WTC11 (cell line): ENCODE measurements at regions of chr6 and their contacts with region 1.

Region 1: DNA sequence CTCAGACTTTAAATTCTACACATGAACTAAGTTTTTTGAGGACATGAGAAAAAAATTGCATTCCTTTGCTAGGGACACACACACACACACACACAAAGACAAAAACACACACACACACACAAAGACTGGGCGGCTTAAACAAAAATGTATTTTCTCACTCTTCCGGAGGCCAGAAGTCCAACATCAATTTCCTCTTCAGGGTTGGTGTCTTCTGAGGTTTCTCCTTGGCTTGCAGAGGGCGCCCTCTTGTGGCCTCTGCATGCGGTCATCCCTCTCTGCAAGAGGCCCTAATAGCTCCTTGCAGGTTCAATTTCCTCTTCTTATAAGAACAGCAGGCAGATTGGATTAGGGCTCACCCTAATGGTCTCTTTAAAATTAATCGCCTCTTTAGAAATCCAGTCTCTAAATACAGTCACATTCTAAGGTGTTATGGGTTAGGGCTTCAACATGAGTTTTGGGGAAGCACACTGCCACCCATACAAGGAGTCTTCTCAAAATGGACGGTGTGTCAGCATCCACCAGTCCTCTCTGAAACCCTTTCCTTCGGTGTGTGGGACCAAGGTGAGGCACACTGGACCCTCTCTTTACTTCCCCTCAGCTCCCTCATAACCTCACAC is 61.4 kb downstream of the GPR6 start:
- DNase-seq: peak; percentile 89
- ATAC-seq: peak; percentile 80
- H3K4me3 Mint-ChIP-seq: peak overlapping the region; percentile 71
- H3K27ac Mint-ChIP-seq: peak overlapping the region; percentile 91
- H3K4me1 Mint-ChIP-seq: peaks cover 23% of the 10 kb centered on the region
- H3K27me3 Mint-ChIP-seq: no peaks in the 10 kb centered on the region
- CTCF ChIP-seq: peak; percentile 92

Region 2: DNA sequence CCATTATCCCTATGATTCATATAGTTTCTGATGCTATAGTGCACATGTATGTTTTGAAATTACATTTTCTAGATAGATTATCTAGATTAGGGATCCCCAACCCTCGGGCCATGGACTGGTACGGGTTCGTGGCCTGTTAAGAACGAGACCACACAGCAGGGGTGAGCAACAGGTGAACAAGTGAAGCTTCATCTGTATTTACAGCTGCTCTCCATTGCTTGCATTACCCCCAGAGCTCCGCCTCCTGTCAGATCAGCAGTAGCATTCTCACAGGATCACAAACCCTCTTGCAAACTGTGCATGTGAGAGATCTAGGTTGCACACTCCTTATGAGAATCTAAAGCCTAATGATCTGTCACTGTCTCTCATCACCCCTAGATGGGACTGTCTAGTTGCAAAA is 933.8 kb before region 1 on chr6:
- CTCF ChIA-PET with region 1: no interaction called
- POLR2A ChIA-PET with region 1: no interaction called
- DNase-seq: no peak
- ATAC-seq: no peak
- H3K4me3 Mint-ChIP-seq: no peak overlapping the region
- H3K27ac Mint-ChIP-seq: no peak overlapping the region
- H3K4me1 Mint-ChIP-seq: no peaks in the 10 kb centered on the region
- H3K27me3 Mint-ChIP-seq: no peaks in the 10 kb centered on the region
- CTCF ChIP-seq: no peak

Region 3: DNA sequence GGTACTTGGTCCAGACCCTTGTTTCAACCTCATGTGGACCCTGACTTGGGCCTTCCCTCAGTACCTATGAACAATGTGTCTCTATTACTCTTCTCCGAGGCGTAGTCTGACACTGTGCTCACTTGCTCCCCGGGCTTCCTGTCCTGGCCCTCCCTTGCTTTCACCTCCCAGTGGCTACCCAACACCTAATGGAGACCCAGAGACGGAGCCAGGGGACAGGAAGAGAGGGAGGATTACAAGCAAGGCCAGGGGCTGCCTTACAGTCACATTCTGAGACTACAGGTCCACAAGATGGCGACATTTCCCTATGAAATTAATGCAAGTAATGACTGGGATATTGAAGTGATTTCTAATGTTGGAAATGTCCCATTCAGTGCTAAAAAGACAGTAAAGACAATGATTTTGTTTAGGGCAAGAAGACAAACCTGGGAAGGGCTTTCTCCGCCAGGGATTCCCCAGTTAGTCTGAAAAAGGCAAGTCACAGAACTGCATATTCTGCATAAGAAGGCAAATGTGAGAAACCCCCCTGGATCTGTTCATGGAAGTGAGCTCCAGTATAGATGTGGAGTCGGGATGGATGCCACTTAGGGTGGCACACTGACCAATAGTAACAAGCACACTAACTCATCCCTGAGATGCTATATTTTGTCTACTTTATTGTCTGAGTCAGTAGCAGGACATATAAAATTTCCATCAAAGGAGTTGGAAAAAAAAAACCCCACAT is 512.4 kb before region 1 on chr6:
- CTCF ChIA-PET with region 1: interaction called, 28 read pairs
- POLR2A ChIA-PET with region 1: interaction called, 3 read pairs
- DNase-seq: peak; percentile 58
- ATAC-seq: peak; percentile 99
- H3K4me3 Mint-ChIP-seq: no peak overlapping the region
- H3K27ac Mint-ChIP-seq: no peak overlapping the region
- H3K4me1 Mint-ChIP-seq: peaks cover 12% of the 10 kb centered on the region
- H3K27me3 Mint-ChIP-seq: no peaks in the 10 kb centered on the region; the same call in 1 of the 2 replicates
- CTCF ChIP-seq: peak; percentile 35; the same call in 1 of the 2 replicates

Region 4: DNA sequence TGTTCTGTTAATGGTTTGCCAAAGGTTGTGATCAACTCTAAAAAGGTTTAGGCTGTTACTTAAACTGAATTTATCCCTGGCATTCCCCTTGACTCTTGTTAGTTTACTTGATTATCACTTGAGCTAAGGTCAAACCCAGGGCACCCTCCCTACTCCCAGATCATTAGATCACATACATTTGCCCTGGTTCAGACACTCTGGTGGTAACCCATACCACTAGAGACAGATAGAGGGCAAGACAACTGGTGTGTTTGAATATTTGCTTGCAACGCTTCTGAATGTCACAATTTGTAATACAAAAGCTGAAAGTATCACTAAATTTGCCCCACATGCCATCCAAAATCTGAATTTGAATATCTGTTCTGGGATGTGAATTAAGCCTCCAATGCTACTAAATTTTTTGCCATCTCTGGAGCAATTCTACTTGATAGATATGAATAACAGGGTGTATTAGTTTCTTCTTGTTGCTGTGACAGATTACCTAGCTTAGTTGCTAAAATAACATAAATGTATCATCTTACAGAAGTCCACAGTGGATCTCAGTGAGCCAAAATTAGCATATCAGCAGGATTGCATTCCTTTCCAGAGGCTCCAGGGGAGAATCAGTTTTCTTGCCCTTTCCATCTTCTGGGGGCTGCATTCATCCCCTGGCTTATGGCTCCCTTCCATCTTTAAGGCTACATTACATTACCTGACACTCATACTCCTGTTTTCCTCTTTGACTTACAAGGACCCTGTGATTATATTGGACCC is 303.0 kb before region 1 on chr6:
- CTCF ChIA-PET with region 1: interaction called, 10 read pairs
- POLR2A ChIA-PET with region 1: no interaction called
- DNase-seq: no peak
- ATAC-seq: peak; percentile 96
- H3K4me3 Mint-ChIP-seq: peak overlapping the region; percentile 1; the same call in 1 of the 2 replicates
- H3K27ac Mint-ChIP-seq: peak overlapping the region; percentile 68; the same call in 1 of the 2 replicates
- H3K4me1 Mint-ChIP-seq: peaks cover 38% of the 10 kb centered on the region
- H3K27me3 Mint-ChIP-seq: no peaks in the 10 kb centered on the region
- CTCF ChIP-seq: no peak

Region 5: DNA sequence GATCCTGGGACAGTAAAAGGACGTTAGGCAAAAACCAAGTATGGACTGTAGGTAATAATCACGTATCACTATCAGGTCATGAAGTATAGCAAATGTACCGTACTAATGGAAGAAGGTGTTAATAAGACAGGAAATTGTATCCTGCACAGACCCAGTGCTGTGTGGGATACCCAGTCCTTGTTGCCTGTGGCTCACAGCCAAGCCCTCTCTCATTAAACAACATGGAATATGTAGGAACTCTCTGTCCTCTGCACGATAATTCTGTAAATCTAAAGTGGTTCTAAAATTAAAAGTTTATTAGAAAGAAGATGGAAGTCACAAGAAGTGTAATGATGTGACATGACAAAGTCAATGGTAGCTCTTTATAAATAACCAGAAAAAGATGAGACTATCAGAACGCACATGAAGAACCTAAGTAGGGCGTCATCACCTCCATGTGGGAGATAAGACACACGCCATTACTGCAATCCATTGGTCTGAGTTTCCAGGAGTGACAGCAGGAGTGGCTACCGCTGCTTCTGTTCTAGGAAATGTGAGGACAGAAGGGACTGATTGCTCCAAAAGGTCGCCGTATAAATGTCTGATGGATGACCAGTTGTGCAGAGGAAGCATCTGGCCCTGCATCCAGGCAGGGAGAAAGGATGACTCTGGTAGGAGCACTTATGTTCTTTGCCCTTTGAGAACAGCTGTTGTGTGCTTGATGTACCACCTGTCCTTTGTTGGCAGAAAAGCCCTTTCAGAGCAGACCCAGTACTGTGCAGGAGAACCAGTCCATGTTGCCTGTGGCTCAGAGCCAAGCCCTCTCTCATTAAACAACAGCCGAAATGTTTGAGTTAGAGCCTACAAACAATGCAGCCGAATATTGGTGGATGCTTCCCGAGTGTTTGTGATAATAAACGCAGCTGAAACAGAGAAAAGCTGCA is 222.8 kb before region 1 on chr6:
- CTCF ChIA-PET with region 1: interaction called, 13 read pairs
- POLR2A ChIA-PET with region 1: no interaction called
- DNase-seq: no peak
- ATAC-seq: no peak
- H3K4me3 Mint-ChIP-seq: no peak overlapping the region
- H3K27ac Mint-ChIP-seq: no peak overlapping the region; the same call in 1 of the 2 replicates
- H3K4me1 Mint-ChIP-seq: peaks cover 6% of the 10 kb centered on the region
- H3K27me3 Mint-ChIP-seq: no peaks in the 10 kb centered on the region
- CTCF ChIP-seq: no peak

Region 6: GRCh38 chr6:109944448-109944847 is 95.0 kb before region 1 on chr6:
- CTCF ChIA-PET with region 1: interaction called, 16 read pairs
- POLR2A ChIA-PET with region 1: no interaction called
- DNase-seq: peak; percentile 39
- ATAC-seq: peak; percentile 85
- H3K4me3 Mint-ChIP-seq: 0 out of 2 replicates have a peak overlapping the region, but pooled peaks have one; percentile 10
- H3K27ac Mint-ChIP-seq: peak overlapping the region; percentile 88
- H3K4me1 Mint-ChIP-seq: peaks cover 58% of the 10 kb centered on the region
- H3K27me3 Mint-ChIP-seq: peaks cover 9% of the 10 kb centered on the region
- CTCF ChIP-seq: no peak

Region 7: GRCh38 chr6:110029144-110029543 is 10.3 kb before region 1 on chr6:
- CTCF ChIA-PET with region 1: interaction called, 24 read pairs
- POLR2A ChIA-PET with region 1: no interaction called
- DNase-seq: no peak
- ATAC-seq: no peak
- H3K4me3 Mint-ChIP-seq: no peak overlapping the region
- H3K27ac Mint-ChIP-seq: no peak overlapping the region
- H3K4me1 Mint-ChIP-seq: no peaks in the 10 kb centered on the region
- H3K27me3 Mint-ChIP-seq: no peaks in the 10 kb centered on the region
- CTCF ChIP-seq: no peak

Region 8: DNA sequence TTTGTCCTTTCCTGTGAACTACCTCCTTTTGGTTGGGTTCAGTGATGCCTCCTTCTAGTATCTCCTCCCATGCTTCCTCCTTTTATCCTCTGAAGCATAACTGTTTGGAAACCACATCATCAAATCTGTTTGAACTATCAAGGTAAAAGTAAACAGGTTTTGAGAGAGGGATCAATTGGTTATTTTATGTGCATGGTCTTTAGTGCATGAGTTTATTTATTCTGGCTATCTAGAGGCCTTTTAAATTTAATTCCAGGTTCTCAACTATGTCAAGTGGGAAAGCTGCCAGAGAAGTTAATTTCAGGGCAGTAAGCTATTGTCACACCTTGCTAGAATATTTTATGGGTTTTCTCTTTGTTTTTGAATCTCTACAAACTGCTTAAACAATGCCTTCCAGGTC is 85.9 kb after region 1 on chr6:
- CTCF ChIA-PET with region 1: no interaction called
- POLR2A ChIA-PET with region 1: no interaction called
- DNase-seq: no peak
- ATAC-seq: no peak
- H3K4me3 Mint-ChIP-seq: no peak overlapping the region
- H3K27ac Mint-ChIP-seq: no peak overlapping the region
- H3K4me1 Mint-ChIP-seq: peaks cover 12% of the 10 kb centered on the region
- H3K27me3 Mint-ChIP-seq: no peaks in the 10 kb centered on the region
- CTCF ChIP-seq: no peak